ENCODE measurements at regions of chr18 and their contacts with region 1.

Region 1: GRCh38 chr18:26159353-26159752 is 25.7 kb downstream of the PSMA8 start:
- DNase-seq: no peak
- H3K4me3 ChIP-seq: no peak overlapping the region
- H3K27ac ChIP-seq: no peak overlapping the region
- H3K27me3 ChIP-seq: no peaks in the 10 kb centered on the region
- CTCF ChIP-seq: peak in 49 of 56 donors; percentile 8 to 61 (median 37)

Region 2: GRCh38 chr18:26090130-26091046 is 69.0 kb before region 1 on chr18 and contains the start of gene SS18:
- intact Hi-C with region 1: loop called in 1 of 2 experiments (anchors 2 kb)
- DNase-seq: peak; percentile 81 to 94 (median 88)
- H3K4me3 ChIP-seq: peak within 1 kb of the TSS; percentile 65 to 97 (median 87)
- H3K27ac ChIP-seq: peak within 1 kb of the TSS; percentile 91 to 99 (median 97)
- H3K27me3 ChIP-seq: no peaks in the 10 kb centered on the region
- CTCF ChIP-seq: peak in 17 of 56 donors; percentile 3 to 32 (median 10)
- total RNA-seq, gene SS18: 37.9 to 81.3 (median 53.9) TPM

Region 3: GRCh38 chr18:26503382-26503781 is 344.0 kb after region 1 on chr18:
- intact Hi-C with region 1: no loop called
- DNase-seq: no peak
- H3K4me3 ChIP-seq: peak overlapping the region in 3 of 59 donors; percentile 6 to 45 (median 31)
- H3K27ac ChIP-seq: no peak overlapping the region
- H3K27me3 ChIP-seq: no peaks in the 10 kb centered on the region
- CTCF ChIP-seq: no peak